Activated B cell treated with CpG ODN at 0.5 μM for 24 hours (primary cell): ENCODE measurements at regions of chr7 and their contacts with region 1.

Region 1: GRCh38 chr7:33109005-33109757 is at the start of gene RP9:
- DNase-seq: peak; percentile 84
- ATAC-seq: peak; percentile 92
- H3K4me3 Mint-ChIP-seq: peak within 1 kb of the TSS; percentile 89
- H3K27ac Mint-ChIP-seq: peak within 1 kb of the TSS; percentile 80
- H3K4me1 Mint-ChIP-seq: peaks cover 43% of the 10 kb centered on the region
- H3K27me3 Mint-ChIP-seq: peaks cover 2% of the 10 kb centered on the region
- CTCF ChIP-seq: no peak
- total RNA-seq, gene RP9: 27.4 and 29.6 TPM in 2 replicates

Region 2: GRCh38 chr7:32761451-32762205 is 347.6 kb before region 1 on chr7:
- CTCF ChIA-PET with region 1: interaction called, 4 read pairs
- POLR2A ChIA-PET with region 1: no interaction called
- intact Hi-C with region 1: loop called (anchors 1 kb)
- DNase-seq: no peak
- ATAC-seq: no peak
- H3K4me3 Mint-ChIP-seq: peak overlapping the region; percentile 53
- H3K27ac Mint-ChIP-seq: no peak overlapping the region
- H3K4me1 Mint-ChIP-seq: peaks cover 15% of the 10 kb centered on the region
- H3K27me3 Mint-ChIP-seq: peaks cover 27% of the 10 kb centered on the region
- CTCF ChIP-seq: no peak

Region 3: DNA sequence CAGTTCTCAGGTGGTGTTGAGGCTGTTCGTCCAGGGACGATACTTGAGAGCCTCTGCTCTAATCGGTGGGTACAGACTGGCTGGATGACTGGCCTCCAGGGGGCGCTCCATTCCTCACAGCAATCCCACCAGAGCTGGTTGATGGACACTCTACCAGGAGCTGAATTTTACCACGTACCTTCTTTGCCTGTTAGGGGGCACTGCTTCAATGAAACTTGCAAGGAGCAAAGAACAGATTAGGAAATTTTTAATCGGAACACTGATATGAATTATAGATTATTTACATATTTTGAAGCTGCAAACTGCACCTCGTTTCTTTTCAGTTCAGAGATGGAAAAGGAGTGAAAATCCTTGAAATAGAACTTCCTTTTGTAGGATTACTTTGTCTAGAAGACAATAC is 262.5 kb before region 1 on chr7:
- CTCF ChIA-PET with region 1: interaction called, 23 read pairs
- POLR2A ChIA-PET with region 1: interaction called, 4 read pairs
- intact Hi-C with region 1: loop called (anchors 1 kb)
- DNase-seq: peak; percentile 81
- ATAC-seq: peak; percentile 100
- H3K4me3 Mint-ChIP-seq: no peak overlapping the region
- H3K27ac Mint-ChIP-seq: no peak overlapping the region
- H3K4me1 Mint-ChIP-seq: peaks cover 5% of the 10 kb centered on the region
- H3K27me3 Mint-ChIP-seq: peaks cover 18% of the 10 kb centered on the region
- CTCF ChIP-seq: peak; percentile 52

Region 4: GRCh38 chr7:32942786-32943653 is 166.2 kb before region 1 on chr7:
- CTCF ChIA-PET with region 1: interaction called, 9 read pairs
- POLR2A ChIA-PET with region 1: interaction called, 8 read pairs
- intact Hi-C with region 1: loop called (anchors 1 kb)
- DNase-seq: peak; percentile 72
- ATAC-seq: peak; percentile 81
- H3K4me3 Mint-ChIP-seq: peak overlapping the region; percentile 92
- H3K27ac Mint-ChIP-seq: no peak overlapping the region
- H3K4me1 Mint-ChIP-seq: peaks cover 23% of the 10 kb centered on the region
- H3K27me3 Mint-ChIP-seq: no peaks in the 10 kb centered on the region
- CTCF ChIP-seq: no peak

Region 5: DNA sequence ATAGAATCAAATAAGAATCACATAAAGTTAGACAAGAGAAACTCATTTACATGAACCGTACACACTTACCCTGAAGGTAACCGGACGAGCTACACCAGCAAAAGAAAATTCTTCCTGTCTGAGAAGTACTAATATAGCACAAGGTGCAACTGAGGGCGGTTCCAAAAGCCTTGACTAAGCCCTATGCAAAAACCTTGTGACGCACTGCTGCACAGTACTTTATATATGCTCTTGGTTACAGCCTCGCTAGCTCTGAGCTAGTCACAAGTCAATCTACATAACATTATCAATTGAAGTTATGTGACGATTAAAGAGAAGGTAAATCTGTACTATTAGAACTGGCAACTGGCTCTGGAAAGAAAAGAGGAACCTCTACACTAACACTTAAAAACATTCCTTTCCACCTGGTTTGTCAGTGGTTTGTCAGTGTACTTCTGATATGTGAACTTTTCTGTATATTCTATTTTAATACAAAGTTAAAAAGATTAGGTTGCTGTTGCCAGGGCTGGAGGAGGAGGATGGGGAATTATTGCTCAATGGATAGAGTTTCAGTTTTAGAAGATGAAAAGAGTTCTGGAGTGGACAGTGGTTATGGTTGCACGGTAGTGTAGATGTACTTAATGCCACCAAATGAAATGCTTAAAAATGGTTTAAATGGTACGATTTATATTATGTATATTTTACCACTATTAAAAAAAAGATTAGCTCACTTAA is 68.2 kb before region 1 on chr7:
- CTCF ChIA-PET with region 1: interaction called, 17 read pairs
- POLR2A ChIA-PET with region 1: interaction called, 14 read pairs
- intact Hi-C with region 1: no loop called
- DNase-seq: no peak
- ATAC-seq: peak; percentile 98
- H3K4me3 Mint-ChIP-seq: peak overlapping the region; percentile 79
- H3K27ac Mint-ChIP-seq: peak overlapping the region; percentile 81
- H3K4me1 Mint-ChIP-seq: peaks cover 75% of the 10 kb centered on the region
- H3K27me3 Mint-ChIP-seq: no peaks in the 10 kb centered on the region
- CTCF ChIP-seq: no peak

Region 6: GRCh38 chr7:33062782-33063443 is 46.3 kb before region 1 on chr7:
- CTCF ChIA-PET with region 1: interaction called, 32 read pairs
- POLR2A ChIA-PET with region 1: interaction called, 44 read pairs
- intact Hi-C with region 1: loop called (anchors 1 kb)
- DNase-seq: peak; percentile 91
- ATAC-seq: peak; percentile 93
- H3K4me3 Mint-ChIP-seq: peak overlapping the region; percentile 91
- H3K27ac Mint-ChIP-seq: peak overlapping the region; percentile 89
- H3K4me1 Mint-ChIP-seq: peaks cover 43% of the 10 kb centered on the region
- H3K27me3 Mint-ChIP-seq: no peaks in the 10 kb centered on the region
- CTCF ChIP-seq: no peak

Region 7: DNA sequence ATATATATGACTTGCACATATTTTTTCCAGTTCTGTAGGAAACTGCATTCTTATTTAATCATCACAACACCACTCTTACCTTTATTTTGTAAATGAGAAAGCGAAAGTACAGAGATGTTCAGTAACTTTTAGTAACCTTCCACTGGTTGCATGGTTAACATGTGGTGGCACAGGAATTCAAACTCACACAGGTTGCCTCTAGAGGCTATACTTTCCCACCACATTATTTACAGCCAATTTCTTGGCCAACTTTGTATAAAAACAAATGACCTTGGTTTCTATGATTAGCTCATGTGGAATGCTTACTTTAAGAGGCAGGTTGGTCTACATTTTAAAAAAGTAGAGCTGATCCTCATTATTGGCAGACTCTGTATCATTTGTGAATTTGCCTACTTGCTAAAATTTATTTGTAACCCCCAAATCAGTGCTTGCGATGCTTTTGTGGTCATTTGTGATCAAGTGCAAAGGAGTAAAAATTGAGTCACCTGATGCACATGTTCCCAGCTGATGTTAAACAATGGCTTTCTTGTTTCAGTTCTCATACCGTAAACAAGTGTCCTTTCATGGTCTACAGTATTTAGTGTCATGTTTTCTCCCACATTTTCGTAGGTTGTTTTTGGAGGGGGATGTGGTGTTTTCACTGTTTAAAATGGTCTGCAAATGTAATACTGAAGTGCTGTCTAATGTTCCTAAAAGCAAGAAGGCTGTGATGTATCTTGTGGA is 35.0 kb after region 1 on chr7:
- CTCF ChIA-PET with region 1: no interaction called
- POLR2A ChIA-PET with region 1: no interaction called
- intact Hi-C with region 1: no loop called
- DNase-seq: no peak
- ATAC-seq: no peak
- H3K4me3 Mint-ChIP-seq: no peak overlapping the region
- H3K27ac Mint-ChIP-seq: no peak overlapping the region
- H3K4me1 Mint-ChIP-seq: no peaks in the 10 kb centered on the region
- H3K27me3 Mint-ChIP-seq: no peaks in the 10 kb centered on the region
- CTCF ChIP-seq: no peak